AG04450 (cell line): ENCODE measurements at regions of chr7 and their contacts with region 1.

Region 1: GRCh38 chr7:121107923-121108498 is 119.5 kb downstream of the CPED1 start:
- DNase-seq: no peak
- H3K4me3 ChIP-seq: no peak overlapping the region
- H3K27ac ChIP-seq: no peak overlapping the region
- H3K27me3 ChIP-seq: no peaks in the 10 kb centered on the region
- CTCF ChIP-seq: peak; percentile 78

Region 2: GRCh38 chr7:119514326-119514725 is 1593.7 kb before region 1 on chr7:
- CTCF ChIA-PET with region 1: no interaction called
- POLR2A ChIA-PET with region 1: no interaction called
- DNase-seq: no peak
- H3K4me3 ChIP-seq: no peak overlapping the region
- H3K27ac ChIP-seq: no peak overlapping the region
- H3K27me3 ChIP-seq: no peaks in the 10 kb centered on the region
- CTCF ChIP-seq: no peak

Region 3: DNA sequence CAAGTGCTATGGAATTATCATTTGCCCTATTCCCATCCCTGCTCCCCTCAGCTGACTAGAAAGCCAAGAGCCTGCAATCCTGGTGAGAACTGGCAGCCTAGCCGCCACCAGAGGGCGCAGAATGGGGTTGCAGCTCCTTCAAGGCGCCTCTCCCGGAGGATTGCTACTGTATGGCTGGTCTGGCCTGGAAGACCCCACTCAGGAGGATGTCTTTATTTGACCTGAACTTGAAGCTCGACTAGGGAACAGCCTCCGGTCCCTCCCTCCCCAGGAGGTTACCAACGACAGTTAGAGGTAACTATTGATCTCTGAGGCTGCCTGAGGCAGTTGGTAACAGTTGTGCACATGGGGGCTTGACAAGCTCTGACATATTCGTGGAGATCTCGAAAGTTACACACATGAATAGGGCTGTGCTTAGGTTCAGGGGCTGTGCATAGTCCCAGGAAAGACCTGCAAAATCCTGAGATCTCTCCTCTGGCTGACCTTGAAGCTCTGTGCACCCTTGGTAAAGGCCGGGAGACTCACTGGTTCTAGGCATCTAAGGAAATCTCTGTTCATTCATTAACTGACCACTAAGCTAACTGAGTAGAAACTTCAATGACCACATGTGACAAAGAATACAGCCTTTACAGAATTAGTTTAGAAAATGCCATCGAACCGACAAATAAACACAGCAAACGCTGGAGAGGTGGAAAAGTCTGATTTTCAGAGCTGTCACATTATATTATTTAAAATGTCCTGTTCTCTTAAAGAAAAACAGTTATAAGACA is 315.7 kb before region 1 on chr7:
- CTCF ChIA-PET with region 1: interaction called, 21 read pairs
- POLR2A ChIA-PET with region 1: no interaction called
- DNase-seq: peak; percentile 29
- H3K4me3 ChIP-seq: no peak overlapping the region
- H3K27ac ChIP-seq: no peak overlapping the region
- H3K27me3 ChIP-seq: no peaks in the 10 kb centered on the region
- CTCF ChIP-seq: peak; percentile 95

Region 4: DNA sequence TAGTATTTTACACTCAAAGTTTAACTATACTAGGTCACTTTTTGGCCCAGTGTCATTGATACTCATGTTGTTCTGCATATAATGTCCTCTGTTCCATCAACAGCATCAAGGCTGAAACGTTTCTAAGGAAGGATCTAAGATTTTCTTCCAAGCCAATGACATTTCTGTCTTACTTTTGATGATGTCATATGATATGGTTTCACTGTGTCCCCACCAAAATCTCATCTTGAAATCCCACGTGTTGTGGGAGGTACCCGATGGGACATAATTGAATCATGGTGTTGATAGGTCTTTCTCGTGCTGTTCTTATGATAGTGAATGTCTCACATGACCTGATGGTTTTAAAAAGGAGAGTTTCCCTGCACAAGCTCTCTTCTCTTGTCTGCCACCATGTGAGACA is 213.8 kb before region 1 on chr7:
- CTCF ChIA-PET with region 1: no interaction called
- POLR2A ChIA-PET with region 1: no interaction called
- DNase-seq: no peak
- H3K4me3 ChIP-seq: no peak overlapping the region
- H3K27ac ChIP-seq: no peak overlapping the region
- H3K27me3 ChIP-seq: peaks cover 4% of the 10 kb centered on the region
- CTCF ChIP-seq: no peak

Region 5: DNA sequence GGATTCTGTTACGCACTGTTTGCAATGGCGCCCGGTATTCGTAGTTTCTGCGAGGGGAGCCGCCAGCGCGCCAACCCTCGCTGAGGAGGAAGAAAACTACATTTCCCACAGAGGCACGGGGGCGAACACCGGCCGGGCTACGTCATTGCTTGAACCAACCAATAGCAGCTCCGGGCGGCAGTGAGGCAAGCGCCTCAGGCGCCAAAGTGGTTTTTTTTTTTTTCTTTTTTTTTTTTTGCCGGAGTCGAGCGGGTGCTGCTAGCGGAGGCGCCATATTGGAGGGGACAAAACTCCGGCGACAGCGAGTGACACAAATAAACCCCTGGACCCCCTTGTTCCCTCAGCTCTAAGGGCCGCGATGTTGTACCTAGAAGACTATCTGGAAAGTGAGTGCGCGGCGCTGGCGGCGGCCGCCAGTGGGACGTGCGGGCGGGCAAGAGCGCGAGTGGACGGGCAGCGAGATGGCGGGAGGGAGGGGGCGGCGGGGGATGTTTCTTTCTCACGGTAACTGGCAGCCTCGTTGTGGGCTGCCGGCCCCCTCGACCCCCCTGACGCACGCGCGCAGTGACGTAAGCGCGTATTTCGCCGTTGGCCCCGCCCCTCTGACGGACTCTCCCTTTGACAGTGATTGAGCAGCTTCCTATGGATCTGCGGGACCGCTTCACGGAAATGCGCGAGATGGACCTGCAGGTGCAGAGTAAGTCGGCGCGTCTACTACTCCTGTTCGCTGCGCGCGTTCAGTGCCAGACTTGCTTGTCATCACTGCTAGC is 157.3 kb before region 1 on chr7 and contains the start of gene ING3:
- CTCF ChIA-PET with region 1: interaction called, 10 read pairs
- POLR2A ChIA-PET with region 1: no interaction called
- DNase-seq: peak; percentile 96
- H3K4me3 ChIP-seq: peak within 1 kb of the TSS; percentile 89
- H3K27ac ChIP-seq: peak within 1 kb of the TSS; percentile 93
- H3K27me3 ChIP-seq: no peaks in the 10 kb centered on the region
- CTCF ChIP-seq: no peak
- polyA plus RNA-seq, gene ING3: 9.8 and 14.5 TPM in 2 replicates

Region 6: GRCh38 chr7:120979765-120980499 is 128.1 kb before region 1 on chr7:
- CTCF ChIA-PET with region 1: interaction called, 13 read pairs
- POLR2A ChIA-PET with region 1: no interaction called
- DNase-seq: no peak
- H3K4me3 ChIP-seq: no peak overlapping the region
- H3K27ac ChIP-seq: no peak overlapping the region
- H3K27me3 ChIP-seq: no peaks in the 10 kb centered on the region
- CTCF ChIP-seq: no peak

Region 7: GRCh38 chr7:120987683-120988590 is 120.1 kb before region 1 on chr7:
- CTCF ChIA-PET with region 1: interaction called, 113 read pairs
- POLR2A ChIA-PET with region 1: interaction called, 5 read pairs
- DNase-seq: peak; percentile 90
- H3K4me3 ChIP-seq: peak overlapping the region; percentile 76
- H3K27ac ChIP-seq: peak overlapping the region; percentile 40
- H3K27me3 ChIP-seq: no peaks in the 10 kb centered on the region
- CTCF ChIP-seq: peak; percentile 99

Region 8: GRCh38 chr7:120996333-120996987 is 111.6 kb before region 1 on chr7:
- CTCF ChIA-PET with region 1: interaction called, 113 read pairs
- POLR2A ChIA-PET with region 1: no interaction called
- DNase-seq: peak; percentile 81
- H3K4me3 ChIP-seq: no peak overlapping the region
- H3K27ac ChIP-seq: no peak overlapping the region
- H3K27me3 ChIP-seq: no peaks in the 10 kb centered on the region
- CTCF ChIP-seq: no peak

Region 9: DNA sequence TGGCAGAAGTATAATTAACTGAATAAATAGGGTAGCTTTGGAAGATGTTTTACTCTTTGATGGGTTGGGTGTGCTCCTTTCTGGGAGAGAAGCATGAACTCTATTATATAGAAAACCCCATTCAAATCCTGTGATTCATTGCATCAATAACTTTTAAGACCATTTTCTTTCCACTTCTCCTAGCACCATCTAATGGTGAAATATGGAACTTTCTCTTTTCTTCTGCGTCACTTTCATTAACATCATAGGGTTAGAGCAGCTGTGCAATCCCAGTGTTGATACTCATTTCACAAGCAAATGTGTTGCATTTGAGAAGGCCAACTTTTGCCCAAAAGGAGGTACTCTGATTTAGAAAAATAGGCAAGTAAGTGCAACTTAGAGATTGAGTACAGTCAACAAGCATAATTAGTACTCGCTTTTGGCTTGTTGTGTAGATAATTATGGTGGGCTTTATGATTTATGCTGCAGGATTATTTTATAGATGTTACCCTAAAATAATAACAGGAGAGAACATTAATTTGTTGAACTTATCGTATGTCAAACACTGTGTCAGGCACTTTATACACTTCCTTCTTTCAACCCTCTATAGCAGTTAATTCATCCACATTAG is 26.6 kb before region 1 on chr7:
- CTCF ChIA-PET with region 1: interaction called, 16 read pairs
- POLR2A ChIA-PET with region 1: interaction called, 3 read pairs
- DNase-seq: peak; percentile 62
- H3K4me3 ChIP-seq: no peak overlapping the region
- H3K27ac ChIP-seq: no peak overlapping the region
- H3K27me3 ChIP-seq: no peaks in the 10 kb centered on the region
- CTCF ChIP-seq: peak; percentile 69